GM10248 (cell line): ENCODE measurements at regions of chr1 and their contacts with region 1.

Region 1: GRCh38 chr1:67760030-67760821 is 73.0 kb downstream of the GNG12 start:
- DNase-seq: peak; percentile 78
- CTCF ChIP-seq: peak; percentile 77

Region 2: GRCh38 chr1:67540733-67541125 is 219.5 kb before region 1 on chr1:
- CTCF ChIA-PET with region 1: interaction called, 31 read pairs
- POLR2A ChIA-PET with region 1: no interaction called
- DNase-seq: no peak
- CTCF ChIP-seq: no peak

Region 3: GRCh38 chr1:67664048-67664447 is 96.2 kb before region 1 on chr1:
- CTCF ChIA-PET with region 1: no interaction called
- POLR2A ChIA-PET with region 1: no interaction called
- DNase-seq: no peak
- CTCF ChIP-seq: no peak

Region 4: GRCh38 chr1:67685067-67685557 is 75.1 kb before region 1 on chr1 and contains the start of gene GADD45A:
- CTCF ChIA-PET with region 1: interaction called, 16 read pairs
- POLR2A ChIA-PET with region 1: interaction called, 19 read pairs
- DNase-seq: peak; percentile 96
- CTCF ChIP-seq: no peak

Region 5: GRCh38 chr1:67729872-67730271 is 30.4 kb before region 1 on chr1:
- CTCF ChIA-PET with region 1: interaction called, 30 read pairs
- POLR2A ChIA-PET with region 1: no interaction called
- DNase-seq: no peak
- CTCF ChIP-seq: no peak

Region 6: DNA sequence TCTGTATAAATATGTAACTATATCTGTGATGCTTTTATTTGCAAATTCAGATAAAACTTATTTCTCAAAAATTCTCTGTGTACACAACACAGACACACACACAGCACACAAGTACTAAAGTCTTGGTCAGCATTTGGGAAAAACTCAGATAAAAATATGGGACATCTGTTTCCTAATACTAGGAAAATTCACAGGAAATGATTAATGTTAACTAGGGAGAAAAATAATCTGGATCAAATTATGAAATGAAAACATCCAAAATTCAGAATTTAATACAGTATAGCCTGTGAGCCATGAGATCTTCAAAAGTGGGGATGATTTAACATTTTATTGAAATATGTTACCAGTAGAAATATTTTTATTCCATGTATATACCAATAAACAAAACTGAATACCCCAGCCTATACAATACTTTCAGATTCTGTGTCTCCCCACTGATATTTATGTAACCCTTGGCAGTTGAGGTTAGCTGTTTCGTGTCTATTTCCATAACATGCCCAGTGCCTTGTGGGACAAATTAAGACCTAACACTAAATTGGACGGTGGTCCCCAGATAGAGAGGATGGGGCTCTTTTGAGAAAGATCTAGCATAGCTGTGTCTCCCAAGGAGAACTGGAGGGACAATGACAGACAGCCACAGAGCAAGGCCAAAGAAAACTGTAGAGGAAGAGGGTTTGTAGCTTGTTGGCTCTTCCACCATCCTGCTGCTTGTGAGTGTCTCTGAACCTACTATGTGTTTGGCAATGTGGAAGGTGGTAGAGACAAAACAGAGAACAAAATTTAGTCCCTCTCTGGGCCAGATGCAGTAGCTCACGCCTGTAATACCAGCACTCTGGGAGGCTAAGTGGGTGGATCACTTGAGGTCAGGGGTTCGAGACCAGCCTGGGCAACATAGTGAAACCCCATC is 25.9 kb after region 1 on chr1:
- CTCF ChIA-PET with region 1: interaction called, 34 read pairs
- POLR2A ChIA-PET with region 1: no interaction called
- DNase-seq: no peak
- CTCF ChIP-seq: no peak

Region 7: DNA sequence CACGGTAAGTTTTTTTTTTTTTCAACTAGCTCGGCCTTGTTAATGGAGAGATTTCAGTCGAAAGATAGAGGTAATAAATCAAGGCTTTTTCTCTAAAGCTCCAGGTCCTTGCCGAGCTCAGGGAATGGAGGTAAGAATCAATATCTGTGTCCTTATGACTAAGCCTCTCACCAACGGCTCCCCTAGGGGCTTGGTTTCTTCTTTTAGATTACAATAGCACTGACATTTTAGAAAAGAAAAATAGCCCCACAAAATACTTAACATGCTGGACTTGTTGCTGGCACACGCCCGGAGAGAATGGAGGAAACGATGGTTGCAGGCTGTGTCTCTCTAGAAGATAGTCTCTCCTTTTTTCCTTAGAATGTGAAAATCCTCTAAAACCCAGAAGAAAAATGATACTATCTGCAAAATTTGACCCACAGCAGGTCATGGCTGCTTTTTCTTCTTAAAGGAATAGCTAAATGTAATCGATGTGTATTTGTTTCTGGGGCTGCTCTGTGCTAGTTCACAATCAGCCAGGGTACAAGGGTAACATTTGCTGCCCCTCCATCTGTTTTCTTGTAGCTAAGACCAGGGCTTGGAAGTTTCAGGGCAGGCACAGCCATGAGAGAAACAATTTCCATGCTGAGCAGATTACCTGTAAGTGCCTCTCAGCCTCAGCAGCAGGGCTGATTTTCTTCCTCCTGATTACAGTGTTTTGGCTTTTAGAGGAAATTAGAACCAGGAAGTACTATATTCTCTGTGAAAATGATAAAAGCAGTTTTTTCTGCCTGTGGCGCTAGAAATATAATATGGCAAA is 159.2 kb after region 1 on chr1:
- CTCF ChIA-PET with region 1: no interaction called
- POLR2A ChIA-PET with region 1: no interaction called
- DNase-seq: no peak
- CTCF ChIP-seq: no peak

Region 8: DNA sequence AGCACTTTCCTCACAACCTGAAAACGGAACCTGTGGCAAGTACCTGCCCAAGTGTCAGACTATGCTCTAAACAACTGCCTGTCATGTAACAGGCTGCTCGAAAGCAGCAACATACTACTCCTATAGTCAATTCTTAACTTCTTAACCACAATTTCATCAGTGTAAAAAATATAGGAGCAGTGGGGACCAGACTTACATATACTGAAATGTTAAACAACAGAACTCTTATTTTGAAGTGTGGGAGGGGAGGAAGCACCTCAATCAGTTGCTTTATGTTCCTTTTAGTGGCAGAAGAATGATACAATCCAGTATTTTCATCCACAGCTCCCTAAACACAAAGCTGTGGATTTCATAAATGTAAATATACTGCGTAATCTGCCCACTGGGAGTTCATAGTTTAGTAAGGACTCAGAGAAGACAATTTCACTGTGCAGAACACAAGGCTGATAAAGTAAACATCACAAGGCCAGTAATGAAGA is 427.9 kb after region 1 on chr1:
- CTCF ChIA-PET with region 1: no interaction called
- POLR2A ChIA-PET with region 1: no interaction called
- DNase-seq: no peak
- CTCF ChIP-seq: no peak